Activated CD8-positive, alpha-beta T cell treated with anti-CD3 and anti-CD28 coated beads for 36 hours (primary cell): ENCODE measurements at regions of chr19 and their contacts with region 1.

Region 1: DNA sequence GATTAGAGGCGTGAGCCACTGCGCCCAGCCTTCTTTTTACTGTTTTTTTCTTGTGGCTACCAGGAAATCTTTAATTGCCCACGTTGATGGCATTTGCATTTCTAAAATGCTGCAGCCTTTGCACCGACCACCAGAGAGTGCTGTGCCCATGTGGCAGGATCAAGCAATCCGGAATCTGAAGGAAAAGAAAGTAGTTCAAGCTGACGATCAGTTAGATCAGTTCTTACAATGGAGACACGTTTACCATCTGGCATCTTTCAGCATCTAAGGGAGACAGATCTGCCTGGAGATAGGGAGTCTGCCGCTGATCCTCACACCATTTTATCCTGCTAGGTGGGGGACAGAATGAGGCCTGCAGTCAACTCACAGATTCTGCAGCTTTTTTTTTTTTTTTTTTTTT is 19.9 kb downstream of the TINCR start:
- DNase-seq: peak; percentile 63
- ATAC-seq: peak; percentile 49
- H3K4me3 Mint-ChIP-seq: no peak overlapping the region
- H3K27ac Mint-ChIP-seq: no peak overlapping the region
- H3K4me1 Mint-ChIP-seq: peaks cover 3% of the 10 kb centered on the region
- H3K27me3 Mint-ChIP-seq: peaks cover 3% of the 10 kb centered on the region
- CTCF ChIP-seq: peak; percentile 57

Region 2: GRCh38 chr19:5580161-5580571 is 32.3 kb after region 1 on chr19:
- CTCF ChIA-PET with region 1: interaction called, 14 read pairs
- POLR2A ChIA-PET with region 1: no interaction called
- intact Hi-C with region 1: no loop called
- DNase-seq: no peak
- ATAC-seq: no peak
- H3K4me3 Mint-ChIP-seq: no peak overlapping the region
- H3K27ac Mint-ChIP-seq: no peak overlapping the region
- H3K4me1 Mint-ChIP-seq: peaks cover 2% of the 10 kb centered on the region
- H3K27me3 Mint-ChIP-seq: no peaks in the 10 kb centered on the region
- CTCF ChIP-seq: no peak